A549 (cell line): ENCODE measurements at regions of chr14 and their contacts with region 1.

Region 1: DNA sequence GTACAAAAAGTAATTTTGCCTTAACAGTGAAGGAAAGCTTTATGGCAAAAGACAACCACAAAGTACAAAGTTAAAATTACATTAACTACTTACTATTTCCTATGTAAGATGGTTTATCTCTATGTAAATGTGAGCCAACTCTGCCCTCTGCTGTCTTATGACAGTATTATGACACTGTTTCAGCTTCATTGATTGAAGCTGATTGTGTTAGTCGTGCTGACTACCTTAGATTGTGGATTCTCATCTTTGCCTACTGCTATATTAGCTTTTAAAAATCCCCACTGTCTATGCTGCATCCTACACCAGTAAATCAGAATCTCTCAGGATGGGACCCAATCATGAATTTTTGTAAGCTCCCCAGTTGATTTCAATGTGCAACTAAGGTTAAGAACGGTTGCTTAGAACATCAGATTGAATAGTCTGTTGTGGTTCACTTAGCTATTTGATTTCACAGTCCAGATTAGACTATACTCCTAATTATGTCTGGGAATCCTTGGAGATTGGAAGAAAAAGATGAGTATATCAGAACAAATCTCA is 12.2 kb upstream of the SPTB start:
- DNase-seq: peak; percentile 56 to 80
- ATAC-seq: peak; percentile 95 to 99
- H3K4me3 ChIP-seq: no peak overlapping the region
- H3K27ac ChIP-seq: no peak overlapping the region
- H3K4me1 ChIP-seq: no peaks in the 10 kb centered on the region
- CTCF ChIP-seq: peak; percentile 79
- EP300 ChIP-seq: no peak
- POLR2A ChIP-seq: no peak
- RAD21 ChIP-seq: peak; percentile 89 to 90

Region 2: DNA sequence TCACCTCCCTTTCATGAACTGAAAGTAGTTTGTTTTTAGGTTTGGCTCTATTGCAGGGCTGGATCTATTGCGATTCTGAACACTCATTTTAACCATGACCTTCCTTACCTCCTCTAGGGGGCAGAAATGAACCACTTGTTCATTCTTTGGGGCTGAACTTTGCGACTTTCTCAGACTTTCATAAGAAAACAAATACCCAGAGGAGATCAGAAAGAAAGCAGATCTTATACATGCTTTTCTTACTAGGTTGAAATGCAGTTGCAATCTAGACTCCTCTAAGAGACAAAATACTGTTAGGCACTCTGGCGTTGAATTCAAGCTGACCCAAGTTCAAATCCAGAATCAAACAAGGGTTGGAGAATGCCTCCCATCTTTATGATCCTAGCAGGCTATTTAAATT is 220.3 kb before region 1 on chr14:
- CTCF ChIA-PET with region 1: interaction called, 73 read pairs
- POLR2A ChIA-PET with region 1: no interaction called
- DNase-seq: peak; percentile 72 to 80
- ATAC-seq: peak; percentile 74 to 87; a peak in 5 of 6 replicates
- H3K4me3 ChIP-seq: no peak overlapping the region
- H3K27ac ChIP-seq: peak overlapping the region; percentile 75 to 79
- H3K4me1 ChIP-seq: peaks cover 37% of the 10 kb centered on the region
- CTCF ChIP-seq: peak; percentile 87
- EP300 ChIP-seq: no peak
- POLR2A ChIP-seq: no peak
- RAD21 ChIP-seq: peak; percentile 94

Region 3: DNA sequence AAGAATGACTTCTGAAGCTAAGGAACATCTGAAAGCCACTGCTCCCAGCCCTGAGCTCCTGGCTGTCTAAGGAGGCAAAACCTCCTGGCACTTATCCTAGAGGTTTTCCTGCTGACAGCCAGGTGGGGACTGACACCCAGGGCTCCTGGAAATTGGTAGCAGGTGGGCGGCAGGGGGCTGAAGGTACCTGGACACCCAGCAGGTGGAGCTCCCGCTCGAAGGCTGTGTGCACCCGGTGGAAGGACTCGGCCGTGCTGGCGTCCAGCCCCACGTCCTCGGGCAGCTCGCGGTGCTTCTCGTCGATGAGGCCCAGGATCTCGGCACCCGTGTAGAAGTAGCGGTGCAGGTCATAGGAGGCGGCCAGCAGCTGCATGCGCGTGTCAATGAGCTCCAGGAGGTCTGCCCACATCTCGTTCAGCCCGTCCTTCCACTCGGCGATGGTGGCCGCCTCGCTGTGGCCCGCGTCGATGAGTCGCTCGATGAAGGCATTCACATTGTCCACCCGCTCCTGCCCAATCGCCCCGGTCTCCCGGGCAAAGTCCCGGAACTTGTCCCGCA is 119.4 kb before region 1 on chr14:
- CTCF ChIA-PET with region 1: interaction called, 102 read pairs
- POLR2A ChIA-PET with region 1: no interaction called
- DNase-seq: no peak
- ATAC-seq: peak in 1 of 2 experiments; percentile 54; a peak in 2 of 6 replicates
- H3K4me3 ChIP-seq: no peak overlapping the region
- H3K27ac ChIP-seq: no peak overlapping the region
- H3K4me1 ChIP-seq: no peaks in the 10 kb centered on the region
- CTCF ChIP-seq: peak; percentile 18; the same call in 1 of the 3 replicates
- EP300 ChIP-seq: no peak
- POLR2A ChIP-seq: no peak
- RAD21 ChIP-seq: peak in 1 of 2 experiments; percentile 21; a peak in 1 of 5 replicates

Region 4: GRCh38 chr14:64806202-64806860 is 85.6 kb before region 1 on chr14:
- CTCF ChIA-PET with region 1: interaction called, 213 read pairs
- POLR2A ChIA-PET with region 1: no interaction called
- DNase-seq: peak; percentile 87 to 91
- ATAC-seq: peak; percentile 88 to 91
- H3K4me3 ChIP-seq: 0 out of 3 replicates have a peak overlapping the region, but pooled peaks have one; percentile 11
- H3K27ac ChIP-seq: peak overlapping the region; percentile 91 to 93
- H3K4me1 ChIP-seq: peaks cover 35% of the 10 kb centered on the region
- CTCF ChIP-seq: no peak
- EP300 ChIP-seq: peak; percentile 74 to 78; a peak in 2 of 5 replicates
- POLR2A ChIP-seq: no peak
- RAD21 ChIP-seq: no peak; a peak in 1 of 5 replicates

Region 5: DNA sequence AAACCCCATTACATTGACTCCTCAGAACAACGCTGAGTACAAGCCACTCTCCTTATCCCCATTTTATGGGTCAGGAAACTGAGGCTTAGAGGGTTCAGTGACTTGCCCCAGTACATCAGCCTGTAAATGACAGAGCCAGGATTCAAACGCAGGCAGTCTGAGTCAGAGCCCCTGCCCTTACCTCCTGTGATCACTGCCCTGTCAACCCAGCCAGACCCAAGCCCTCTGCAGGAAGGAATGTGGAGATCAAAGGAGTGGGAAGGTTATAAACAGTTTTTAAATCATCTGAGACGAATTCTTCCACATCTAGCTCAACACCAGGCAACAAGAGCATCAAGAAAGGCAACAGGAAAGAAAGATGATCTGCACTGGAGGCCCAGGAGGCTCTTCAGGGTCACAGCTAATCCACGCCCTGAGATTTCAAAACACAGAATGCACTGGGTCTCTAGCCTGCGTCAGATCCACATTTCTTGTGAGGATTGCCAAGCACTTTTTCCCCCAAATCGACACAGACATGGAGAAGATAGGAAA is 50.7 kb before region 1 on chr14:
- CTCF ChIA-PET with region 1: interaction called, 61 read pairs
- POLR2A ChIA-PET with region 1: no interaction called
- DNase-seq: peak; percentile 58 to 69
- ATAC-seq: peak; percentile 97
- H3K4me3 ChIP-seq: no peak overlapping the region
- H3K27ac ChIP-seq: 0 out of 6 replicates have a peak overlapping the region, but pooled peaks of 1 of the 2 experiments have one; percentile 17
- H3K4me1 ChIP-seq: peaks cover 13% of the 10 kb centered on the region; the same call in 1 of the 3 replicates
- CTCF ChIP-seq: peak; percentile 45
- EP300 ChIP-seq: no peak
- POLR2A ChIP-seq: no peak
- RAD21 ChIP-seq: peak in 1 of 2 experiments; percentile 39; a peak in 2 of 5 replicates

Region 6: GRCh38 chr14:64914237-64914971 is 22.5 kb after region 1 on chr14 and contains the start of gene CHURC1:
- CTCF ChIA-PET with region 1: interaction called, 23 read pairs
- POLR2A ChIA-PET with region 1: no interaction called
- DNase-seq: peak; percentile 92 to 99
- ATAC-seq: peak; percentile 97 to 99
- H3K4me3 ChIP-seq: peak within 1 kb of the TSS; percentile 98
- H3K27ac ChIP-seq: peak within 1 kb of the TSS; percentile 89 to 99
- H3K4me1 ChIP-seq: peaks cover 30% of the 10 kb centered on the region
- CTCF ChIP-seq: no peak
- EP300 ChIP-seq: no peak
- POLR2A ChIP-seq: peak; percentile 89
- RAD21 ChIP-seq: no peak
- polyA plus RNA-seq, gene CHURC1: 115 and 153 TPM in 2 replicates

Region 7: DNA sequence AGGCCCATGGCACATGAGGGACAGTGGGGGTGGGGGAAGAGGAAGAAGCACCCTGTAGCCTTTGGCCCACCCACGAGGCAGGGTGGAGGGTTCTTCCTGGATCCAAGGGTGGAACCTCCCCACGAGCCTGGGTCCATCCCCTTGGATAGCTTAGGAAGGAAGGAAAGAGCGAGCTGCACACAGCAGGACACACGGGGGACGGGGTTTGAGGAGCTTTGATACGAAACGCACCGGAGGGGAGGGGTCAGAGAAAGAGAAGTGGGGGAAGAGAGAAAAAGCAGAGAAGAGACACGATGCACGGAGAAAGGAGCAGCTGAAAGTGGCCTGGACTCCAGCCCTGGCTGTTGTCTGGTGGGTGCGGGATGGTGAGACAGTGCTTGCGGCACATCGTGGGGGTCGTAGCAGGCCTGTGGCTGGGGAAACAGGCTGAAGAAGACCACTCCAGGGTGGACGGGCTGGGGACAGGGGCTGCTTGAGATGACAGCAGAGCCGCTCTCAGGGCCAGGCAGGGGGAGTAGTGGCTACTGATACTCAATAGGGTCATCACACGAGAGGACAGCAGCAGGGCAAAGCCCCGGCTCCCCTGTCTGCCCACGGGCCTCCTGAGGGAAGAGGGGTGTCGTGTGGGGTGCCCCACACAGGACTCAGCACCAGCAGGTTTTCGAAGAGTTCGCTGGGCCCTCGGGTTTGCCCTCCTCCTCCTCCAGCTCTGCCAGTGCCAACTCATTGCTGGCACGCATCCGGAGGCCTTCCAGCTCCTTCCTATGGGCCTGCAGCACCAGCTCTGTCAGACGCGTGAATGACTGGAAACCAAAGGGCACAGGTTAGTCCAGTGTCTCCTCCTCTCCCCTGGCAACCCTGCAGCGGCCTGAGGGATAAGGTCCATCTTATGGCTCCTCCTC is 56.1 kb after region 1 on chr14:
- CTCF ChIA-PET with region 1: no interaction called
- POLR2A ChIA-PET with region 1: no interaction called
- DNase-seq: no peak
- ATAC-seq: no peak
- H3K4me3 ChIP-seq: no peak overlapping the region
- H3K27ac ChIP-seq: no peak overlapping the region
- H3K4me1 ChIP-seq: peaks cover 13% of the 10 kb centered on the region
- CTCF ChIP-seq: no peak
- EP300 ChIP-seq: no peak
- POLR2A ChIP-seq: no peak
- RAD21 ChIP-seq: no peak

Region 8: DNA sequence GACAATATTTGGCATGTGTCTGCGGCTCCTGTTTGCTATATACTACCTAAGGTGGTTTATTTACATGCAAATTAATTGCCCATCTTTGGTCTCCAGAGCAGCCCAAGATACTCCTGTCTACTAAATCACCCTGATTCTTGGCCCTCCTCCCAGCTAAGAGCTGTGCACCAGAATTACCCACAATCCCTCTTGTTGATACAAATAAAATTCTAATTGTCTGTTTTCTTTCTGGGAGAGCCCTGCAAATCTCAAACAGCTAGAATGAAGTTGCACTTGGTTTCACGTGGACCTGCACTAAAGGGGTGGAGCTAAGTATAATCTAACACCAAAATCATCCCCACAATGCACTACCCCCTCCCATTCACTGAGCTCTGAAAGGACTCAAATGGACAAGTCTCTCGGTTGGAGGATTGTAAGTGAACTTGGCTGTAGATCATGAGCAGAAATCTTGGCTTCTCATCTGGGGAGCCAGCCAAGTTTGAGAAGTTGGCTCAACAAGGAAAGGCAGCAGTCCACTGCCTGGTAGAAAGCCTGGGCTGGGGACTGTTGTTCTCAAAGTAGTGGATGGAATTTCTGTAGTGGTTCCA is 203.8 kb after region 1 on chr14:
- CTCF ChIA-PET with region 1: no interaction called
- POLR2A ChIA-PET with region 1: no interaction called
- DNase-seq: no peak
- ATAC-seq: no peak
- H3K4me3 ChIP-seq: no peak overlapping the region
- H3K27ac ChIP-seq: no peak overlapping the region
- H3K4me1 ChIP-seq: peaks cover 3% of the 10 kb centered on the region; the same call in 1 of the 3 replicates
- CTCF ChIP-seq: no peak
- EP300 ChIP-seq: no peak
- POLR2A ChIP-seq: no peak
- RAD21 ChIP-seq: no peak